Activated naive CD8-positive, alpha-beta T cell treated with anti-CD3 and anti-CD28 coated beads, Interleukin-2, amount 10 ng/mL, durations not matched to agents 7 days and 5 days (primary cell): ENCODE measurements at regions of chr14 and their contacts with region 1.

Region 1: GRCh38 chr14:20343092-20343861 is at the start of gene PARP2:
- DNase-seq: peak; percentile 91
- ATAC-seq: peak; percentile 94
- H3K4me3 Mint-ChIP-seq: peak within 1 kb of the TSS; percentile 100
- H3K27ac Mint-ChIP-seq: peak within 1 kb of the TSS; percentile 99
- H3K4me1 Mint-ChIP-seq: peaks cover 13% of the 10 kb centered on the region
- H3K27me3 Mint-ChIP-seq: peaks cover 3% of the 10 kb centered on the region
- total RNA-seq, gene PARP2: 28.3 to 32.7 TPM

Region 2: GRCh38 chr14:20327005-20327869 is 16.0 kb before region 1 on chr14:
- POLR2A ChIA-PET with region 1: interaction called, 43 read pairs
- DNase-seq: no peak
- ATAC-seq: no peak
- H3K4me3 Mint-ChIP-seq: peak overlapping the region; percentile 46
- H3K27ac Mint-ChIP-seq: peak overlapping the region; percentile 54
- H3K4me1 Mint-ChIP-seq: peaks cover 31% of the 10 kb centered on the region
- H3K27me3 Mint-ChIP-seq: no peaks in the 10 kb centered on the region

Region 3: GRCh38 chr14:20413045-20413799 is 69.9 kb after region 1 on chr14 and contains the start of gene TEP1:
- POLR2A ChIA-PET with region 1: interaction called, 17 read pairs
- DNase-seq: peak; percentile 82
- ATAC-seq: peak; percentile 88
- H3K4me3 Mint-ChIP-seq: peak within 1 kb of the TSS; percentile 99
- H3K27ac Mint-ChIP-seq: peak within 1 kb of the TSS; percentile 99
- H3K4me1 Mint-ChIP-seq: peaks cover 38% of the 10 kb centered on the region
- H3K27me3 Mint-ChIP-seq: no peaks in the 10 kb centered on the region
- total RNA-seq, gene TEP1: 57.9 to 68.3 TPM

Region 4: DNA sequence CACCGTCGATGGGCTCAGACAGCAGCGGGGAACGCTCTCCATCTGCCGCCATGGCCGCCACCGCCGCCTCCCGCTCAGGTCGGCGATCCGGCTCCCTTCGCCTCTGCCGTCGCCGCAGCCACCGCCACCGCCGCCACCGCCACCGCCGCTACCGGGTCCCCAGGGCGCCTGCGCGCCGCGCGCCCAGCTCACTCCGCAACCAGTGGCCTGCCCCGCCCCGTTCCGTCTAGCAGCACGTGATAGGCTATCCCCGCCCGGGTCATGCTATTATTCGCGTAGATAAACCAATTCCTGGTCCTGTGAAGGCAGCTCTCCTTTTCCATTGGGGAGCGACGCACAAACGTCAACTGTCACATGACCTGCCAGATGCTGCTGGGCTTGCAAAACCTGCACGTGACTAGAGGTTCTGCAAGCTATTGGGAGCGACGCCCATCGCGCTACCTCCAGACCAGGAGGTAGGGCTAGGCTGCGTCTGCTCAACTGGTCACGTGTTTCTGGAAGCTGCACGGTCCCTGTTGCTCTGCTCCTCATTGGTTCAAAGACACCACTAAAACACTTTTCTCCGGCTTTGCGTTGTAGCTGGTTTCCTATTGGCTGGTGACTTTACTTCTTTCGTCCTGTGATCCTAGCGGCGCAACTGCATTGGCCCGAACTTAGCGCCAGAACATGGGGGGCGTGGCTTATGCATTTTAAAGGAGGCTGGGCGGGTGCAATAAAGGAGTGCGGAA is 118.2 kb after region 1 on chr14 and contains the start of gene PIP4P1:
- POLR2A ChIA-PET with region 1: interaction called, 27 read pairs
- DNase-seq: peak; percentile 97
- ATAC-seq: peak; percentile 96
- H3K4me3 Mint-ChIP-seq: peak within 1 kb of the TSS; percentile 98
- H3K27ac Mint-ChIP-seq: peak within 1 kb of the TSS; percentile 93
- H3K4me1 Mint-ChIP-seq: peaks cover 26% of the 10 kb centered on the region
- H3K27me3 Mint-ChIP-seq: no peaks in the 10 kb centered on the region
- total RNA-seq, gene PIP4P1: 42.4 to 45.8 TPM

Region 5: GRCh38 chr14:20613094-20614037 is 270.1 kb after region 1 on chr14:
- POLR2A ChIA-PET with region 1: interaction called, 11 read pairs
- DNase-seq: peak; percentile 79
- ATAC-seq: peak; percentile 79
- H3K4me3 Mint-ChIP-seq: no peak overlapping the region
- H3K27ac Mint-ChIP-seq: no peak overlapping the region
- H3K4me1 Mint-ChIP-seq: peaks cover 12% of the 10 kb centered on the region
- H3K27me3 Mint-ChIP-seq: peaks cover 2% of the 10 kb centered on the region